Activated CD8-positive, alpha-beta T cell treated with anti-CD3 and anti-CD28 coated beads for 36 hours (primary cell): ENCODE measurements at regions of chr5 and their contacts with region 1.

Region 1: DNA sequence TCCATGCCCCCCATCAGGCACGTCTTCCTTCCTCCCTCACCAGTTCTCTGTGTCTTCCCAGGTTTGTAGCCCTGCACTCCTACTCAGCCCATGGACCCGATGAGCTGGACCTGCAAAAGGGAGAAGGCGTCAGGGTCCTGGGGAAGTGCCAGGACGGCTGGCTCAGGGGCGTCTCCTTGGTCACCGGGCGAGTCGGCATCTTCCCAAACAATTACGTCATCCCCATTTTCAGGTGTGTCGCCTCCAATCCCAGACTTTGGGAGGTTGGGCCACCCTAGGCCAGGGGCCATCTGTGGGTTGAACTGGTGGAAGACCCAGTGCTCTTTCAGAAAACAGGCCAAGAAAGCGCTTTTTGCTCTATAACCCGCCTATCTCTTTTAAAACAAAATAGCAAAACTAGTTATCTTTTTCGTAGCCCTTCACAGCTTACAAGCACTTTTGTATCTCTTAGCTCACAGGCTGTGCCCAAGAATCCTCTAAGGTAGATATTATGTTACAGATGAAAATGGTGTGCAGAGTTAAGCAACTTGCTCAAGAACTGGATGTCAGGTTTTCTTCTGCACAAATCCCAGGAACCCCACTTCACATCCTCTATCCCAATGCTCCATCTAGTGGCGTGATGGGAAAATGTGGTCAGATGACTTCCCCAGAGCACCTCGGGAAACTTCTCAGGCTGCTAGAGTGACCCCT is 56.2 kb downstream of the PLAC8L1 start:
- DNase-seq: peak; percentile 39
- ATAC-seq: no peak
- H3K4me3 Mint-ChIP-seq: no peak overlapping the region
- H3K27ac Mint-ChIP-seq: no peak overlapping the region
- H3K4me1 Mint-ChIP-seq: no peaks in the 10 kb centered on the region
- H3K27me3 Mint-ChIP-seq: peaks cover 3% of the 10 kb centered on the region
- CTCF ChIP-seq: peak; percentile 46

Region 2: DNA sequence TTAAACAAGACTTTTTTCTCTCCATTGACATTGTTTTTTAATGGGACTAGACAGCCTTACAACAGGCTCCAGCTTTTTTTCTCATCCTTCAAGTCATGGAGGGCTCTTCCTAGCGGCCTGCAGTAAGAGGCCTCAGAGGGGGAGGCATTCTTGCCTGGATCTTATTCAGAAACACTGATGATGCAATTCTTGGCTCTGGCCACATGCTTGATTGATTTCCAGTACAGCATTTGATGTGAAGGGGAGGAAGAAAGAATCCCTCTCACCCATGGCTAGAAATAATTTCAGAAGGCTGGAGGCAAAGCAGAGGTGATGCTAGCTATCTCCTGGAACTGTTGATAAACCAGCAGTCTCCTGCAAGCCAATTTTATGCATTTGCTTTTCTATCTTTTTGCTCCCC is 538.8 kb before region 1 on chr5:
- CTCF ChIA-PET with region 1: no interaction called
- POLR2A ChIA-PET with region 1: no interaction called
- intact Hi-C with region 1: no loop called
- DNase-seq: no peak
- ATAC-seq: no peak
- H3K4me3 Mint-ChIP-seq: no peak overlapping the region
- H3K27ac Mint-ChIP-seq: no peak overlapping the region
- H3K4me1 Mint-ChIP-seq: no peaks in the 10 kb centered on the region
- H3K27me3 Mint-ChIP-seq: no peaks in the 10 kb centered on the region
- CTCF ChIP-seq: no peak

Region 3: GRCh38 chr5:145681686-145682085 is 367.5 kb before region 1 on chr5:
- CTCF ChIA-PET with region 1: no interaction called
- POLR2A ChIA-PET with region 1: no interaction called
- intact Hi-C with region 1: loop called (anchors 10 kb)
- DNase-seq: peak; percentile 63
- ATAC-seq: peak; percentile 86
- H3K4me3 Mint-ChIP-seq: no peak overlapping the region
- H3K27ac Mint-ChIP-seq: no peak overlapping the region
- H3K4me1 Mint-ChIP-seq: no peaks in the 10 kb centered on the region
- H3K27me3 Mint-ChIP-seq: no peaks in the 10 kb centered on the region
- CTCF ChIP-seq: peak; percentile 56